ENCODE measurements at regions of chrX and their contacts with region 1.

Region 1: GRCh38 chrX:151974336-151975227 is at the start of gene GABRE:
- DNase-seq: peak; percentile 65 to 69
- H3K4me3 ChIP-seq: peak within 1 kb of the TSS; percentile 63
- H3K4me3 Mint-ChIP-seq: peak within 1 kb of the TSS; percentile 76
- H3K27ac Mint-ChIP-seq: peak within 1 kb of the TSS; percentile 55
- H3K4me1 ChIP-seq: peaks cover 3% of the 10 kb centered on the region; the same call in 1 of the 2 replicates
- H3K4me1 Mint-ChIP-seq: peaks cover 7% of the 10 kb centered on the region
- H3K27me3 ChIP-seq: no peaks in the 10 kb centered on the region
- H3K27me3 Mint-ChIP-seq: no peaks in the 10 kb centered on the region
- CTCF ChIP-seq: no peak
- total RNA-seq, gene GABRE: 39.8 and 40.4 TPM in 2 replicates

Region 2: GRCh38 chrX:151988706-151989496 is 14.3 kb after region 1 on chrX:
- CTCF ChIA-PET with region 1: no interaction called
- POLR2A ChIA-PET with region 1: no interaction called
- intact Hi-C with region 1: loop called (anchors 2 kb)
- DNase-seq: no peak
- H3K4me3 ChIP-seq: no peak overlapping the region
- H3K4me3 Mint-ChIP-seq: peak overlapping the region; percentile 22
- H3K27ac Mint-ChIP-seq: peak overlapping the region; percentile 34
- H3K4me1 ChIP-seq: peaks cover 37% of the 10 kb centered on the region
- H3K4me1 Mint-ChIP-seq: peaks cover 24% of the 10 kb centered on the region
- H3K27me3 ChIP-seq: no peaks in the 10 kb centered on the region
- H3K27me3 Mint-ChIP-seq: no peaks in the 10 kb centered on the region
- CTCF ChIP-seq: no peak

Region 3: DNA sequence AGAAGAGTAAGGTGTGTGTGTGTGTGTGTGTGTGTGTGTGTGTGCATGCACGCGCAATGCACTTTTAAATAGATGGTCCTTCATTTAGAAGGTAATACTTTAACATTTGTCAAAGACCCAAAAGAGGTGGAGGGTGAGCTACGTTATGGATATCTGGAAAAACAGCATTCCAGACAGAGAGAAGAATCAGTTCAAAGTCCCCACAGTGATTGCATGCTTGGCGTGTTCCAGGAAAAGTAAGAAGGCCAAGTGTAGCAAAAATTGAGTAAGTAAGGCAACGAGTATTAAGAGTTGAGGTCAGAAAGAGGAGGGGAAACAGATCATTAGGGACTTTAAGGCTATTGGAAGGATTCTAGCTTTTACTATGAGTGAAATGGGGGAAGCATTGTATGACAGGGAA is 21.8 kb after region 1 on chrX:
- CTCF ChIA-PET with region 1: no interaction called
- POLR2A ChIA-PET with region 1: no interaction called
- intact Hi-C with region 1: loop called (anchors 1 kb)
- DNase-seq: peak; percentile 47 to 55
- H3K4me3 ChIP-seq: no peak overlapping the region
- H3K4me3 Mint-ChIP-seq: peak overlapping the region; percentile 62
- H3K27ac Mint-ChIP-seq: peak overlapping the region; percentile 85
- H3K4me1 ChIP-seq: peaks cover 25% of the 10 kb centered on the region
- H3K4me1 Mint-ChIP-seq: peaks cover 11% of the 10 kb centered on the region
- H3K27me3 ChIP-seq: no peaks in the 10 kb centered on the region
- H3K27me3 Mint-ChIP-seq: no peaks in the 10 kb centered on the region
- CTCF ChIP-seq: no peak

Region 4: DNA sequence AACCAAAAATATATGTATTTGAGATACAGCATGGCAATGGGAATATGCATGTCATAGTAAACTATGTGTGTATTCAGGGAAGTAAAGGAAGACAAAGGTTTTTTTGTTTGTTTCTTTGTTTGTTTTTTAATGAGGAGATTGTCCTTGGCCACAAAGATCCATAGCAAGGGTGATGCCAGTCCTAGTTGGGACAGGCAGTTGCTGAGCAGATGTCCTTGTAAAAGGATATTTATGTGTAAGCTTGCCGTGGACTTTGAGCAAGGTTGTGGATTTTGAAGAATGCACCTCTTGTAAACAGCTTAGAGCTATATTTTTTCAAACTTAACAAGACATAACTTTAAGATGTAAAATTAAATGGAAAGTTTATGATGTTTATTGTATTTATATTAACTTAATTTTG is 69.8 kb after region 1 on chrX:
- CTCF ChIA-PET with region 1: no interaction called
- POLR2A ChIA-PET with region 1: no interaction called
- intact Hi-C with region 1: loop called (anchors 10 kb)
- DNase-seq: no peak
- H3K4me3 ChIP-seq: no peak overlapping the region
- H3K4me3 Mint-ChIP-seq: no peak overlapping the region
- H3K27ac Mint-ChIP-seq: no peak overlapping the region
- H3K4me1 ChIP-seq: no peaks in the 10 kb centered on the region
- H3K4me1 Mint-ChIP-seq: peaks cover 8% of the 10 kb centered on the region
- H3K27me3 ChIP-seq: no peaks in the 10 kb centered on the region
- H3K27me3 Mint-ChIP-seq: no peaks in the 10 kb centered on the region
- CTCF ChIP-seq: no peak

Measured in Caco-2 (cell line).